ENCODE measurements at regions of chr3 and their contacts with region 1.

Region 1: DNA sequence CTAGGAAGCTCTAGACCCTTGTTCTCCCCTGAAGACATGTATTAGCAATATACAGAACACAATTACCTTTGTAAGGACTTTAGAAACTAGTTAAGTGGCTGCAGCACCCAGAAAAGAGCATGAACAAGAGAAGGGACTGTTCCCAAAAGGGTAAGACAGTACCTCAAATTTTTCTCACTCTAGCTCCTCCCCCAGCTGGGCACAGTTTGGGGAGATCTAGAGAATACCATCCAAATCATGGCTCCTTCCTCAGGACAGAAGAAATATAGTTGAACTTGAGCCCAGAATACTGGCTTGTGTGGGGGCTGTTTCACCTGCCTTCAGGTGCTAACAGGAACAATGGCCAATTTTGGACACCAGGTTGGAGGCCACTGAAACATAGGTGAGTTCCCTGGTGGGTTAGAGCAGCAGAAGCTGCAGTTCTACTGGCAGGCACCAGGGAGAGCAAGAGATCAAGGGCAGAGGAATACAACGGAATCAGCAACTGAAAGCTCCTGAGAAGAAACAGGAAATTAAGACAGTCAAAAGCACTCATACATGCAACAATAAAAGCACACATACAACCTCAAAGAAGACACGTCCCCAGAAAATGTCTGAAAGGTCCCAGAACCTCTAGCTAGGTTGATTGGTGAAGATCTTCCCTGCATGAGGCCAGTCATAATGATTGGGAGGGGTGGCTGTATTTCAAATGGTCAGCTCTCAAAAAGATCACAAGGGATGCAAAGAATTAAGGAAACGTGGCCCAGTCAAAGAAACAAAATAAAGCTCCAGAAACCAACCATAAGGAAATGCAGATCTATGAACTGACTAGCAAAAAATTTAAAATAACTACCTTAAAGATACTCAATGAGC is 104.9 kb upstream of the ASB14 start:
- DNase-seq: peak; percentile 74
- H3K4me3 Mint-ChIP-seq: peak overlapping the region; percentile 30
- H3K27ac Mint-ChIP-seq: no peak overlapping the region
- H3K4me1 Mint-ChIP-seq: peaks cover 6% of the 10 kb centered on the region
- H3K27me3 Mint-ChIP-seq: peaks cover 64% of the 10 kb centered on the region
- CTCF ChIP-seq: peak; percentile 90

Region 2: DNA sequence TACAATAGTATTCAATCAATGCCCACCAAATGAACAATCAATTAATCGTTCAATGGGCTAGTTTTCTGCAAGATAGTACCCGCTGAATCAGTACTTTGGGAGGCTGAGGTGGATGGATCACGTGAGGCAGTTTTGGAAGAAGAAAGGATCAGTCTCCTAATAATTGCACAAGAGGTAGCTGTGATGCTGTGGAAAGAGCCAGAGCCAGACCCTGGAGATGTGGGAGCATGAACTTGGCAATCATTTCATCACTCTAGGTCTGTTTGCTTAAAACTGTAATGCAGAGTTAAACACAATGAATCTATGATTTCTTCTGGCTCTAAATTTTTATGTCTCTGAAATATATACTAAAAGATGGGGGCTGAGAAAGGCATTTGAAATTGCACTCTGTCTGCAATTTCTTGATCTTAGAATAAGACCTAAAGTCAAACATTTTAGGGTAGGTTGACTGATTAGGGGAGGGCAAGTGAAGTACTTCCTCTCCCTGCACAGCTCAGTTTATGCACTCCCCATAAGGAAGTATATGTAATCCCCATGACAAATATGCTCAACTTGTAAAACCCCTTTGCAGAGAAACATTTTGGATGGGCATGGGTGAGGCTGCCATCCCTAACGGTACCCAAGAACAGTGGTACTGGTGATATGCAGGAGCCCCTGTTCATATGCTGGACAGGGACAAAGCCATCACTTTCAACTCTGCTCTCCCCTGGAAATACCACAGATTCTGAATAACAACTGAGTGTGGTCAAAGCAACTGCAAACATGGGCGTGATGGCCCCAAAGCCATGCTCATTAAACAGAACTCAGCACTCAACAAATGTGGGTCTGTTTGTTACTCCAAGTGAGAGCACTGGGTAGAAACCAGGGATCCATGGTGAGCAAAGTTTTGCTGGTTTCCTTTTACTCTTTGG is 365.5 kb before region 1 on chr3:
- CTCF ChIA-PET with region 1: no interaction called
- POLR2A ChIA-PET with region 1: no interaction called
- intact Hi-C with region 1: no loop called
- DNase-seq: no peak
- H3K4me3 Mint-ChIP-seq: no peak overlapping the region
- H3K27ac Mint-ChIP-seq: no peak overlapping the region
- H3K4me1 Mint-ChIP-seq: no peaks in the 10 kb centered on the region
- H3K27me3 Mint-ChIP-seq: no peaks in the 10 kb centered on the region
- CTCF ChIP-seq: no peak

Region 3: GRCh38 chr3:57354768-57355167 is 42.6 kb before region 1 on chr3:
- CTCF ChIA-PET with region 1: no interaction called
- POLR2A ChIA-PET with region 1: no interaction called
- intact Hi-C with region 1: no loop called
- DNase-seq: no peak
- H3K4me3 Mint-ChIP-seq: no peak overlapping the region
- H3K27ac Mint-ChIP-seq: no peak overlapping the region
- H3K4me1 Mint-ChIP-seq: no peaks in the 10 kb centered on the region
- H3K27me3 Mint-ChIP-seq: peaks cover 14% of the 10 kb centered on the region
- CTCF ChIP-seq: no peak

Region 4: DNA sequence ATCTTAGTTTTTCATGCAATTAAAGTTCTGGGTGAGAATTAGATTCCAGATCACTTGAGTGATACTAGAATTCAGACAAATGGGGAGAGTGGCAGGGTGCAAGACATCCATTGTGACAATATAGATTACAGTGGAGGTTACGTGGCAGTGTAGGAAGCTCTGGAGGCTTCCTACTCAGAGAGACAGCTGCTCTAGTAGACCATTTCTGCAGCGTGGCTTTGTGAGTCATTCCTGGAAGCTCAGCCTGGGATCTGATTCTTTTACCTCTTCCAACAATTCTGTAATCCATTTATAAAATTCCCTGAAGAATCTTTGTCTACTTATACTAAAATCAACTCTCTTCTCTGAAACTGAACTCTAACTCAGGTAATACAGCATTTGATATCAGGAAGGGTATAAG is 14.5 kb before region 1 on chr3:
- CTCF ChIA-PET with region 1: interaction called, 24 read pairs
- POLR2A ChIA-PET with region 1: no interaction called
- intact Hi-C with region 1: no loop called
- DNase-seq: no peak
- H3K4me3 Mint-ChIP-seq: no peak overlapping the region
- H3K27ac Mint-ChIP-seq: no peak overlapping the region
- H3K4me1 Mint-ChIP-seq: no peaks in the 10 kb centered on the region
- H3K27me3 Mint-ChIP-seq: peaks cover 15% of the 10 kb centered on the region
- CTCF ChIP-seq: no peak

Region 5: DNA sequence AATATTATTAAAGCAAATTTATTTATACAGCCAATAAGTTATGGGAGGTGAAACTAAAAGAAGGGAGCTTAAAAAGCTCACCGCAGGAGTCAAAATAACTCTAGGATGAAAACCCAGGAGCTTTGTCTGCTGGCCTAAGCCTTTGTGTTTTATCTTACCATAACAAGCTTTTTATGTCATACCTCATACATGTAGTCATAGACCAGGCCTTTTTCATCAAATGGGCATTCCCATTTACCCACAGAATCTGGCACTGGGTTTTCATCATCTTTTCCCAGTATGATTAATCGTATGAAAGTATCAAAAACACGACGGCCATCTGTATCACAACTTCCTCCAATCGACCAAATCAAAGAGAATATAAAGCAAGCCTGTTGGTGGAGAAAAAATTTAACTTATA is 23.9 kb after region 1 on chr3:
- CTCF ChIA-PET with region 1: interaction called, 11 read pairs
- POLR2A ChIA-PET with region 1: no interaction called
- intact Hi-C with region 1: no loop called
- DNase-seq: no peak
- H3K4me3 Mint-ChIP-seq: no peak overlapping the region
- H3K27ac Mint-ChIP-seq: no peak overlapping the region
- H3K4me1 Mint-ChIP-seq: no peaks in the 10 kb centered on the region
- H3K27me3 Mint-ChIP-seq: peaks cover 11% of the 10 kb centered on the region
- CTCF ChIP-seq: no peak

Region 6: GRCh38 chr3:57484563-57484962 is 87.2 kb after region 1 on chr3:
- CTCF ChIA-PET with region 1: no interaction called
- POLR2A ChIA-PET with region 1: no interaction called
- intact Hi-C with region 1: no loop called
- DNase-seq: no peak
- H3K4me3 Mint-ChIP-seq: no peak overlapping the region
- H3K27ac Mint-ChIP-seq: no peak overlapping the region
- H3K4me1 Mint-ChIP-seq: no peaks in the 10 kb centered on the region
- H3K27me3 Mint-ChIP-seq: no peaks in the 10 kb centered on the region
- CTCF ChIP-seq: no peak

Region 7: DNA sequence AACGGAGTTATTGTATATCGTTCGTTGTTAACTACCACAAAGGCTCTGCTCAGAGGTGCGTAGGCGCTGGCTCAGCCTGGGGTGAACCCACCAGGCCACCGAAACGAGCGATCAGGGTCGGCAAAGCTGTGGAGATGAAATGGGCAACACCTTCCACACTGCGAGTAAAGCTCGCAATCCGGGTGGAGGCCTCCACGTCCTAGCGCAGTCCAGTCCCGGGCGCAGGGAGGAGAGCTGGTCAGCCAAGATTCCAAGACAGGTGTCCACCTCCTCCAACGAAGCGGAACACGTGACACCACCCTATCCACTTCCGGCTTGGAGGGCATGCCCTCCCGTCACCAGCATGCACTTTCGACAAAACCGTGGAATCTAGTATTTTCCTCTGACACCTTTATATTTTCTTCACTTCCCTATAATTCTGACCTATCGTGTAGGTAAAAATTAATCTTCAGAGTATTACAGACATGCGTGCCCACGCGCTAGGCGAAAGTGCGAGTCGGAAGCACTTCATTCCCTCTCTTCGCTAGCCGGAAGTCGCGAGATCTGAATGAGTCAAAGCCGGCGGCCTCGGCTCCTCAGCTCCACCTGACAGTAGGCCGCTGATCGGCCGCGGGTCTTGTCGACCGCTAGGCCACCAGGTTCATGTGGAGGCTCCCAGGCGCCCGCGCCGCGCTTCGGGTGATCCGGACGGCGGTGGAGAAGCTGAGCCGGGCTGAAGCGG is 158.5 kb after region 1 on chr3 and contains the start of gene PDE12:
- CTCF ChIA-PET with region 1: no interaction called
- POLR2A ChIA-PET with region 1: interaction called, 17 read pairs
- intact Hi-C with region 1: loop called (anchors 2 kb)
- DNase-seq: peak; percentile 92
- H3K4me3 Mint-ChIP-seq: peak within 1 kb of the TSS; percentile 63
- H3K27ac Mint-ChIP-seq: peak within 1 kb of the TSS; percentile 96
- H3K4me1 Mint-ChIP-seq: peaks cover 12% of the 10 kb centered on the region
- H3K27me3 Mint-ChIP-seq: no peaks in the 10 kb centered on the region
- CTCF ChIP-seq: no peak
- total RNA-seq, gene PDE12: 23.0 and 23.1 TPM in 2 replicates

Region 8: DNA sequence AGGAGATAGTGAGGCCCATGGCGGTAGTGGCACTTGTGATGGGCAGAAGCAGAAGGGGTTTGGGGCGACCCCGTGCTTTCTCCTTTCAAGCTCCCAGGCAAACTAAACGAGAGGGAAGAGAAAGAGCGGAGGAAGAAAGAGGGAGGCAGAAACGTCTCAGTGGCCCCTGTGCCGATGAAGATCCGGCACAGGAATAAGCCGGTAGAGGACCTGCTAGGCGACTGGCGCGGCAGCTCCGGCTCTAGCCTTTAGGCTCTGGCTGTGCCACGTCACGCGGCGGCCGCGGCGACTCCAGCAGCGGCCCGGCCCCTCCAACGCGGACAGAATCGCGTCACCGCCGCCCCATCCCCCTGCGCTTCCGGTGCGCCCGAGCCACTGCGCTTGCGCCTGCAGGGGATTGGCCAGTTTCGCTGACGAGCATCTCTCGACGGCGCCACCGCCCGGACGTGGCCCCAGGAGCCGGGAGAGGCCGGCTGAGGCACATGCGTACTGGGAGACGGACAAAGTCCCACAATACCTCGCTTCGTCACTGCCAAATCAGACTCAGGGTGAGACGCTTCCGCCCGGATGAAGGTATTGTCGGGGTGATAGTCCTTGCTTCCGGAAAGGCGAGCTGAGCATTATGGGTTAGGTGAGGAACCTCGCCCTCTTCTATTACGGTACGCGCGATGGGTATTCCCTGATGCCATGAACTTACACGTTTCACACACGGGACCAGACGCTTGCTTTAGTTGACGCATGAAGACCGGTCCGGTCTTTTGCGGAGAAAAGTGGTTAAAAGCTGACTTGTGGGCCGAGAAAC is 199.9 kb after region 1 on chr3 and contains the start of gene ARF4:
- CTCF ChIA-PET with region 1: interaction called, 4 read pairs
- POLR2A ChIA-PET with region 1: interaction called, 17 read pairs
- intact Hi-C with region 1: no loop called
- DNase-seq: peak; percentile 100
- H3K4me3 Mint-ChIP-seq: peak within 1 kb of the TSS; percentile 86
- H3K27ac Mint-ChIP-seq: peak within 1 kb of the TSS; percentile 100
- H3K4me1 Mint-ChIP-seq: peaks cover 31% of the 10 kb centered on the region
- H3K27me3 Mint-ChIP-seq: no peaks in the 10 kb centered on the region
- CTCF ChIP-seq: no peak
- total RNA-seq, gene ARF4: 275 and 396 TPM in 2 replicates

Region 9: DNA sequence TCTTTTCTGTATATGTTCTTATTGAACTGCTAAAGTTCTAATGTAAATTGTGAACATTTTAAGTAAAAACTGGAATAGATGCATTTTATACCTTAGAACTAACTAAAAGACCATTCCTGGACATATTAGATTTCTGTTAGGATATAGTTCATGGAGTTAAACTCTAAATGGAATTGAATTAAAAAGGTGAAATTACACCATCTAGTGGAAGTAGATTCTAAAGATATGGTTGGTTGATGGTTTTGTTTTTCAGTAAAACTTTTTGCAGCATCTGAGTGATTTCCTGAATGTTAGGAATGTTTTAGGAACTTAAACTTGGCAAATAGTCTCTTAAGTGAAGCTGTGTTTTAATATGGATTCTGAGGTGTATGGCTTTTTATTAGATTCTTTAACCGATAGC is 455.5 kb after region 1 on chr3:
- CTCF ChIA-PET with region 1: interaction called, 3 read pairs
- POLR2A ChIA-PET with region 1: no interaction called
- intact Hi-C with region 1: loop called (anchors 2 kb)
- DNase-seq: peak; percentile 25
- H3K4me3 Mint-ChIP-seq: no peak overlapping the region
- H3K27ac Mint-ChIP-seq: no peak overlapping the region
- H3K4me1 Mint-ChIP-seq: peaks cover 6% of the 10 kb centered on the region
- H3K27me3 Mint-ChIP-seq: no peaks in the 10 kb centered on the region
- CTCF ChIP-seq: peak; percentile 24